ENCODE measurements at regions of chr1 and their contacts with region 1.

Region 1: DNA sequence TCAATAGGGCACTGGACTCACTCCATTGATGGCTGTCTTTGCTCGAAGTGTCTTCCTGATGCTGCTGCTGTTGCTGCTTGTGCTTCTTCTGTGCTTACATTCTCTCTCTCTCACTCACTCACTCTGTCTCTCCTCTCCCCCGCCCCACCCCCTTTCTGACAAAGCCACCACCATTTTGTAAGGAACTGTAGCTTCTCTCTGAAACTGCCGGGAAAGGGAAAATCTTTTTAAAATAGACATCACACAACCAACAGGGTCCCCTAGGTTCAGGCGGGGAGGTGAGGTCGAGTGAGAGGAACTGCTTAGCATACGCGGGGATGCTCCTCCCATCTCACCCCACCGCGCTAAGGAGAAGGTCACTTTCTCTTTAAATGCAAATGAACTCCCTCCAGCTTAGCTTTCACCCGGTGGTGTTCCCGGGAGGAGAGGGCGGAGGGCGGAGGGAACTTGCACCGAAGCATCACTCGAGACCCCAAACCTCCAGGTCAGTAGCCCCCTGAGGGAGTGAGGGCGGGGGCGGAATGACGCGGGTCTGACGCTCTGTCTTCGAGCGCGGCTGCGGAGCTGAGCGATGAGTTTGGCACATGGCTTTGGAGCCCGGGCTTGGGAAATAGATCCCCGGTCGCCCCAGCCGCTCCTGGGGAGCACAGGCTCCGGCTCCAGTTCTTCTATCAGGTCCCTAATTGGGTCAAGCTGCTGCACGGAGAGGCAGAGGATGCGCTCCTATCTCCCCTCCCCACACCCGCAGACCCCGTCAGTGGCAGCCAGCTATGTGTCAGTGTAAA is at the start of gene CCDC28B:
- DNase-seq: peak; percentile 81
- ATAC-seq: peak; percentile 59
- H3K4me3 ChIP-seq: peak within 1 kb of the TSS; percentile 63
- H3K27ac ChIP-seq: peak within 1 kb of the TSS; percentile 78
- H3K4me1 ChIP-seq: peaks cover 33% of the 10 kb centered on the region
- H3K27me3 ChIP-seq: no peaks in the 10 kb centered on the region
- CTCF ChIP-seq: no peak
- POLR2A ChIP-seq: peak; percentile 77; the same call in 1 of the 2 replicates
- RAD21 ChIP-seq: peak; percentile 5; the same call in 1 of the 2 replicates
- total RNA-seq, gene CCDC28B: 17.2 and 18.6 TPM in 2 replicates

Region 2: DNA sequence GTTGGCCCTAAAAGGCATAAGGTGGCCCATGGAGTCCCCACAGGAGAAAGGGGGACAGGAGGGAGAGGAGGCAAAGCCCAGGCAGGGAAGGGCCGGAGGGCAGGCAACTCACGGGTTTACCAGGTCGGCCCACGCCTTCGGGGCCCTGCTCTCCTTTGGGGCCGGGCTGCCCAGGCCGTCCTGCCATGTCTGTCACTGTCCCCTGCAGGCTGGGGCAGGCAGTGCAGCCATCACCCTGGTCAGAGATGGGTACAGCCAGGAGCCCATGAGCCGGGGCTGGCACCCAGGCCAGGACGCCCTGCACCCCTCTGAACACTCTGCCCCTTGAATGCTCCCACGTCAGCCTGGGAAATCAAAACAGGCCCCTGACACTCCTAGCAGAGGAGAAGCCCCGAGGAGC is 516.4 kb before region 1 on chr1:
- CTCF ChIA-PET with region 1: no interaction called
- POLR2A ChIA-PET with region 1: no interaction called
- dilution Hi-C with region 1: no loop called
- in situ Hi-C with region 1: no loop called
- intact Hi-C with region 1: no loop called
- DNase-seq: no peak
- ATAC-seq: peak; percentile 34; the same call in 1 of the 2 replicates
- H3K4me3 ChIP-seq: no peak overlapping the region
- H3K27ac ChIP-seq: no peak overlapping the region
- H3K4me1 ChIP-seq: peaks cover 16% of the 10 kb centered on the region
- H3K27me3 ChIP-seq: no peaks in the 10 kb centered on the region
- CTCF ChIP-seq: peak; percentile 22; the same call in 1 of the 2 replicates
- POLR2A ChIP-seq: no peak
- RAD21 ChIP-seq: no peak

Region 3: DNA sequence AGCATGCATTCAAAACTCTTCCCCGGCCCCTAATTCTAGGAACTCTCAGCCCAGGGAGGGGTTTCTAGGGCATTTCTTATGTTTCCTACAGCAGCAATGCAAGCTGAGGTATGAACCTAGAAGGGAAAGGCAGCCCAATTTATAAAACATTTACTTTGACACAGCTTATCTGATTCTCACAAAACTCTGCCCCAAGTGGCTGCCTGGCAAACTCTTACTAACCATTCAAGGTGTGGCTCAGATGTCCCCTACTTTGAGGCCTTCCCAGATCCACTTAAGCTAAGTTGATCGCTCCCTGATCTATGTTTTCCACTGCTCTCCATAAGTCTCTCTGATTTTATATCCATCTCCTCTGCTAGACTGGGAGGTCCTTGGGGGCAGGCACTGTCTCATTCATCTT is 800.9 kb after region 1 on chr1:
- CTCF ChIA-PET with region 1: no interaction called
- POLR2A ChIA-PET with region 1: interaction called, 11 read pairs
- dilution Hi-C with region 1: no loop called
- in situ Hi-C with region 1: no loop called
- intact Hi-C with region 1: no loop called
- DNase-seq: no peak
- ATAC-seq: no peak
- H3K4me3 ChIP-seq: no peak overlapping the region
- H3K27ac ChIP-seq: no peak overlapping the region
- H3K4me1 ChIP-seq: peaks cover 31% of the 10 kb centered on the region
- H3K27me3 ChIP-seq: no peaks in the 10 kb centered on the region
- CTCF ChIP-seq: no peak
- POLR2A ChIP-seq: no peak
- RAD21 ChIP-seq: no peak

Measured in IMR-90 (cell line).